ENCODE measurements at regions of chr12 and their contacts with region 1.

Region 1: DNA sequence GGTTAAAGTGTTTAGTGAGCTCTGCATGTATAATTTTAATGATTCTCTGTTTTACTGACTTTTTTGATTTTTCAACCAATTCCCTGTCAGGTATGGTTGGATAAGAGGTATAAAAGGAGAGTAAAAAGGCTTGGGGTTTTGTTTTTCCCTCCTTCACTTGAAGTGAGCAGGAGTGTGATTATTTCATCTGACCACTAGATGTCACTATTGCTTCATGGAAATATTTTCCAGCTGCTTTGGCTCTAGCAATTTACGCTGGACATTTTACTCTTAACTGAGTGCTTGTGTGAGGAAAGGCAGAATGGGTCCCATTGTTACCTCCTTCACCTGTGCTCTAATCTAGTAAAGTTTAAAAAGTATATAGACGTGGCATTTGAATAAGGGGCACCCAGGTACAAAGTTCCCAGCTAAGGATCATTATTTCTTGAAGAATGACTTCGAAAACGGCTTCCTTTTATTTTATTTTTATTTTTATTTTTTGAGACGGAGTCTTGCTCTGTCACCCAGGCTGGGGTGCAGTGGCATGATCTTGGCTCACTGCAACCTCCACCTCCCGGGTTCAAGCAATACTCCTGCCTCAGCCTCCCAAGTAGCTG is 66.5 kb downstream of the TBC1D30 start:
- DNase-seq: peak; percentile 54
- H3K4me3 ChIP-seq: no peak overlapping the region; a peak in 1 of 4 replicates
- H3K27ac ChIP-seq: no peak overlapping the region
- H3K4me1 ChIP-seq: no peaks in the 10 kb centered on the region; a peak in 1 of 4 replicates
- H3K27me3 ChIP-seq: no peaks in the 10 kb centered on the region
- CTCF ChIP-seq: peak; percentile 80
- EP300 ChIP-seq: no peak
- RAD21 ChIP-seq: peak; percentile 95

Region 2: DNA sequence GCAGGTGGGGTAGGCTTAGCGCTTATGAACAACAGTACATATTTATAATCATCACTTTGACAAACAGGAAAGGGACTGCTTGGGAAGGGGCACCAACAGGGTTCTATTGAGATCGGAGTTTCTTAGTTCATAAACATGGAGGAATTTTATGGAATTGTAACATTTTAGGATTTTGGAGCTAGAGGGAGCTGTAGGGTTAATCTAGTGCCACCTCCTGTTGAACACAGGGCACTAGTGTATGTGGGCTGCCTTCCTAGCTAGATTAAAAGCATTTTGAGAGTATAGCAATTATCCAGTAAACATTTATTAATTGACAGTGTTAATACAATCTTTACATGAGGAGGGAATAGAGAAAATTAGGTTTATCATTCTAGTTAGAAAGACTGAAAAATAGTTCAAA is 89.6 kb before region 1 on chr12:
- CTCF ChIA-PET with region 1: interaction called, 12 read pairs
- POLR2A ChIA-PET with region 1: no interaction called
- DNase-seq: peak; percentile 31
- H3K4me3 ChIP-seq: no peak overlapping the region
- H3K27ac ChIP-seq: no peak overlapping the region
- H3K4me1 ChIP-seq: no peaks in the 10 kb centered on the region
- H3K27me3 ChIP-seq: peaks cover 17% of the 10 kb centered on the region; the same call in 1 of the 2 replicates
- CTCF ChIP-seq: peak; percentile 45
- EP300 ChIP-seq: no peak
- RAD21 ChIP-seq: peak; percentile 23; the same call in 1 of the 2 replicates

Region 3: GRCh38 chr12:64903479-64904152 is 12.6 kb after region 1 on chr12:
- CTCF ChIA-PET with region 1: interaction called, 15 read pairs
- POLR2A ChIA-PET with region 1: no interaction called
- DNase-seq: no peak
- H3K4me3 ChIP-seq: no peak overlapping the region
- H3K27ac ChIP-seq: no peak overlapping the region
- H3K4me1 ChIP-seq: no peaks in the 10 kb centered on the region
- H3K27me3 ChIP-seq: peaks cover 7% of the 10 kb centered on the region; the same call in 1 of the 2 replicates
- CTCF ChIP-seq: no peak
- EP300 ChIP-seq: no peak
- RAD21 ChIP-seq: no peak

Region 4: GRCh38 chr12:65106948-65107347 is 216.0 kb after region 1 on chr12:
- CTCF ChIA-PET with region 1: interaction called, 21 read pairs
- POLR2A ChIA-PET with region 1: no interaction called
- DNase-seq: no peak
- H3K4me3 ChIP-seq: no peak overlapping the region; a peak in 1 of 4 replicates
- H3K27ac ChIP-seq: no peak overlapping the region
- H3K4me1 ChIP-seq: no peaks in the 10 kb centered on the region
- H3K27me3 ChIP-seq: peaks cover 14% of the 10 kb centered on the region; the same call in 1 of the 2 replicates
- CTCF ChIP-seq: peak; percentile 57
- EP300 ChIP-seq: no peak
- RAD21 ChIP-seq: no peak

Region 5: DNA sequence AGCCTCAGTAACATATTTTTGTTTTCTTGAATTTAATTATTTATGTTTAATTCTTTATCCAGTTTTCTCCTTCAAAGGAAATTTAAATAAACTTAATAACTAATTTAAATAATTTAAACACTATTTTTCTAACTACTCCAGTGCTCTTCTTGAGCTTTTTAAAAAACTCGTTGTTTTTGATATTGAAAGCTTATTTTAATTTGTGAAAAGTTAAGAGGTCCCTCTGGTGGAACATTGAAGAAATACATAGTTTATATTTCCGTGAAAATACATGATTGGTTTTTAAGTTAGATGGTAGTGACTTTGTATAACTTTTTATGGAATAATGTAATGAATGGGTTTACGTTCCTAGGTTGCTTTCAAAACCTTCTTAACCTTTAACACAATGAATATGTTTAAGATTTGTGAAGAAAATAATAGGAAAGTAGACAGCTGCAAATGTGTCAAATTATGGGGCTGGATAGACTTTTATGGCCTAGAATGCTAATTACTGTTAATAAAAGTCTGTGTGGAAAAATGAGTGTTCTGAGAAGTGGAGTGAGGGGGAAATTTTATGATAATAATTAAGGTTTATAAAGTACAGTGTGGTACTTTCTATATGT is 341.6 kb after region 1 on chr12:
- CTCF ChIA-PET with region 1: interaction called, 53 read pairs
- POLR2A ChIA-PET with region 1: no interaction called
- DNase-seq: peak; percentile 12
- H3K4me3 ChIP-seq: no peak overlapping the region
- H3K27ac ChIP-seq: no peak overlapping the region
- H3K4me1 ChIP-seq: no peaks in the 10 kb centered on the region; a peak in 1 of 4 replicates
- H3K27me3 ChIP-seq: no peaks in the 10 kb centered on the region
- CTCF ChIP-seq: peak; percentile 65
- EP300 ChIP-seq: no peak
- RAD21 ChIP-seq: peak; percentile 53

Measured in SK-N-SH (cell line).